PC-3 (cell line): ENCODE measurements at regions of chr12 and their contacts with region 1.

Region 1: GRCh38 chr12:27969624-27970400 is 2.7 kb downstream of the PTHLH start:
- DNase-seq: peak; percentile 100
- ATAC-seq: peak; percentile 57
- H3K4me3 ChIP-seq: peak overlapping the region; percentile 68
- H3K27ac ChIP-seq: peak overlapping the region; percentile 76
- H3K4me1 ChIP-seq: peaks cover 78% of the 10 kb centered on the region
- H3K27me3 ChIP-seq: no peaks in the 10 kb centered on the region
- CTCF ChIP-seq: no peak

Region 2: GRCh38 chr12:28121899-28122655 is 152.3 kb after region 1 on chr12:
- CTCF ChIA-PET with region 1: no interaction called
- POLR2A ChIA-PET with region 1: interaction called, 6 read pairs
- intact Hi-C with region 1: loop called (anchors 2 kb)
- DNase-seq: peak; percentile 53
- ATAC-seq: peak; percentile 59
- H3K4me3 ChIP-seq: no peak overlapping the region; the same call in 1 of the 2 replicates
- H3K27ac ChIP-seq: peak overlapping the region; percentile 65
- H3K4me1 ChIP-seq: peaks cover 45% of the 10 kb centered on the region
- H3K27me3 ChIP-seq: no peaks in the 10 kb centered on the region
- CTCF ChIP-seq: no peak

Region 3: GRCh38 chr12:28683356-28683755 is 713.5 kb after region 1 on chr12:
- CTCF ChIA-PET with region 1: no interaction called
- POLR2A ChIA-PET with region 1: no interaction called
- intact Hi-C with region 1: loop called (anchors 10 kb)
- DNase-seq: no peak
- ATAC-seq: no peak
- H3K4me3 ChIP-seq: no peak overlapping the region
- H3K27ac ChIP-seq: no peak overlapping the region
- H3K4me1 ChIP-seq: no peaks in the 10 kb centered on the region
- H3K27me3 ChIP-seq: no peaks in the 10 kb centered on the region
- CTCF ChIP-seq: no peak

Region 4: DNA sequence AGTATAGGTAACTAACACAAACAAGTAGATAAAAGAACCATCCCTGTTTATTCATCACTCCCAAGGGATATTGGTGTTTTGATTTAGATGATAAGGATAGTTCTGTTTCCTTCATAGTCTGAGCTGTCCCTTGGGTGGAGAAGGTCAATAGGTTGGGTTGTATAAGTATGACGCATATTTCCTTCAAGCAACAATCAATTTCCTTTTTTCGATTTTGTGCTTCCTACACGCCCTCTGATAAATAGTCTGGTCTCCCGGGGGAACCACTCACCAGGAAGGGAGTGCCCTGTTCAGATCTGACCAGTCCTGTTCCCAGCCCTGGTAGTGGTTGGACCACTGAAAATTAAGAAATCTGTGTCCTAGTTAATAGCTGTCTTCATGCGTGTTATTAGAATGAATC is 800.5 kb after region 1 on chr12:
- CTCF ChIA-PET with region 1: interaction called, 3 read pairs
- POLR2A ChIA-PET with region 1: interaction called, 3 read pairs
- intact Hi-C with region 1: loop called (anchors 1 kb)
- DNase-seq: peak; percentile 97
- ATAC-seq: peak; percentile 92
- H3K4me3 ChIP-seq: no peak overlapping the region
- H3K27ac ChIP-seq: peak overlapping the region; percentile 69
- H3K4me1 ChIP-seq: peaks cover 15% of the 10 kb centered on the region
- H3K27me3 ChIP-seq: no peaks in the 10 kb centered on the region
- CTCF ChIP-seq: no peak

Region 5: GRCh38 chr12:28882444-28882843 is 912.6 kb after region 1 on chr12:
- CTCF ChIA-PET with region 1: no interaction called
- POLR2A ChIA-PET with region 1: interaction called, 29 read pairs
- intact Hi-C with region 1: no loop called
- DNase-seq: peak; percentile 54
- ATAC-seq: peak; percentile 18; the same call in 1 of the 2 replicates
- H3K4me3 ChIP-seq: no peak overlapping the region
- H3K27ac ChIP-seq: no peak overlapping the region
- H3K4me1 ChIP-seq: 0 out of 2 replicates have a peak, but pooled peaks cover 3% of the 10 kb centered on the region
- H3K27me3 ChIP-seq: no peaks in the 10 kb centered on the region
- CTCF ChIP-seq: no peak

Region 6: DNA sequence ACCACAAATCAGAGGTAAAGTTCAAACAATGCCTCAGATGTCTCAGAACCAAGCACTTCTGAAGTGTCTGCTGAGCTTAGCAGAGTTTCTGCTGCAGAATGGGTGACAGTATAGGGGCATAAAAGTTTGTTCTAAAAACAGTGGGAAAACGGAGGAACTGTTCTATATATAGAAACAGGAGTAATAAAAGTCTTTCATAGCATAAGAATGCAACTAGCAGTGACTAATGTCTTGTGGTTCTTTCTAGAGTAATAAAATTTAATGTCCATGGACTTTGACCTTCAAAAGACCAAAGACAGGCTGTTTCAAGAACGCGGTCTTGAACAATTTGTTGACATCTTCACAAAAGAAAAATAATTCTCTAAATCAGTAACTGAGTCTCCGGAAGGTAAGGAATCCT is 1071.8 kb after region 1 on chr12:
- CTCF ChIA-PET with region 1: no interaction called
- POLR2A ChIA-PET with region 1: no interaction called
- intact Hi-C with region 1: loop called (anchors 2 kb)
- DNase-seq: peak; percentile 99
- ATAC-seq: peak; percentile 85
- H3K4me3 ChIP-seq: peak overlapping the region; percentile 34; the same call in 1 of the 2 replicates
- H3K27ac ChIP-seq: peak overlapping the region; percentile 88
- H3K4me1 ChIP-seq: peaks cover 49% of the 10 kb centered on the region
- H3K27me3 ChIP-seq: no peaks in the 10 kb centered on the region
- CTCF ChIP-seq: no peak